ENCODE measurements at regions of chr1 and their contacts with region 1.

Region 1: DNA sequence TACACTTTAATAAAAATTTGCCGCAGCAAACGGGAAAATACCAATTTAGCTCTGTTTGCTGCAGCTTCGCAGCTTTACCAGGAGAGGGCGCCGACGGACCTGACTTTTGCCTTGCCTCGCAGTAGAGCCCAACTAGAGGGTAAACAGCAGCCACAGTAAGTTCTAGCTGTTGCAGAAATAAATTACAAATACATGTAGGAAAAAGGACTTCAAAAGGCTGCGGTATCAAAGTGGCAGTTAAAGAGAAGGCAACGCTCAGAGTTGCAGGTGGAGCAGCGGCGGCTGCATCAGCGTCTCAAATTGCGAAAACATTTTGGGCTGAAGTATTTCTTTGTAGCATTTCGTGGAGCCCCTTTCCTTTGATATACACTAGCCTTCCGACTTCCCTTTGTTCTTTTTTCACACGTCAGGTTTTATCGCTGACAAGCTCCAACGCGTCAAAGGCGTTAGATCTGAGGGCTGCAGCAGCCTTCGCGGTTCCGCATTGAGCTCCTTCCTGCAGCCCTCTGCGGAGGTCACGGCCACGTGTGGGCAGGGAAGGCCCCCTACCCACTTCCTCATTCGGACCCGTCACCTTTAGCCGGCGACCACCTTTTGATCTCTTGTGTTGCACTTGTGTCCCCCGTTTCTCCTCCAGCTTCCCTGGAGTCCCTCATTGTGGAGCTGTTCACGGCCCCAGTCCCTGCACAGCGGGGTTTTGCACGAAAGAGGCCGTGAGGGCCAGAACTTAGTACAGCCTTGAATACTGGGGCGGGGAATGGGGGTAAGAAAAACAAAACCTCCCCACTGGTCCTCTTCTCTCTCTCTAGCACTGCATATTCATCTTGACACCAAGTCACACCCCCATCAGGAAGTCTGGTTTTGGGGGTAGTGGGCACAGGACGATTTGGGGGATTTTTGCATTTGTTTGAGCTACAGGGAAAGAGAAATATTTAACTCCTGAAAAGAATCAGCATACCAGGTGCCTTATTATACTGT is 72.8 kb downstream of the S1PR1 start:
- DNase-seq: peak; percentile 57
- ATAC-seq: peak; percentile 75
- H3K4me3 Mint-ChIP-seq: peak overlapping the region; percentile 82
- H3K27ac Mint-ChIP-seq: peak overlapping the region; percentile 94
- H3K4me1 Mint-ChIP-seq: peaks cover 78% of the 10 kb centered on the region
- H3K27me3 Mint-ChIP-seq: no peaks in the 10 kb centered on the region
- CTCF ChIP-seq: peak; percentile 77

Region 2: DNA sequence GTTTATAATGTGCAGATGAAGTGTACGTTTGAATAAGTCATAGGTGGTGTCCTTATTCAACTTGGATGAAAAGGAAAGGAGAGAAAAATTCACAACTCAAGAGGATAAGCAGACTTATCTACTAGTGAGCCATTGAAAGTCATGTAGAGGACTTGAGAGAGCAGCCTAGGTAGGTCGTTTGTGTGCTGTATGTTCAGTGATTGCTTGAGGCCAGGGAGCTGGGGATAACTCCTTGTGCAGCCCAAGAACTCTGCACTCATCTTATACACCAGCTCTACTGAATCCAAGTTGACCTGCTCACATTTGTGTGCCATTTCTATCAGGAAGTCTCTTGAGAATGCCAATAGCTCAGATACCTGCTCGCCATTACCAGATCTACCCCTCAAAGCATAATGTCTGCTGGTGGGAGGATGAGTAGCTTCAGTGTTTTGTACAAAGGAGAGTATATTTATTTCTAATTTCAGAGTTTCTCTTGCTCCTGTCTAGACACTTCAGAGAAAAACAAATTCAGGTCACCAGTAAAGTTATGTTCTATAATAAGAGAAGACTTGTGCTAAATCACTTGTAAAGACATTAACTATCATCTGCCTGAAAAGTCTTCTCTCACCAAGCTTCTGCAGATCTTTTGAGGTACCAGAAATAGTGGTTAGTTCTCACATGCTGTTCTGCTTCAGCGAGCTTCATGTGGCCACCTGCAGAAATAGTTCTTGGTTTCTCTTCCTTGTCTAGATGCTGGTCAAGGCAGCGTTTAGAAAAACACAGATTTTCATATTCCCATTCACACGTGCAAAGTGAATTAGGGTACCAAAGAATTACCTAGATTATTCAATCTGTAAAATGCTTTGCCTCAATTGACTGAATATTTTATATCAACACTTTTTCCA is 62.0 kb before region 1 on chr1:
- CTCF ChIA-PET with region 1: interaction called, 7 read pairs
- POLR2A ChIA-PET with region 1: interaction called, 14 read pairs
- intact Hi-C with region 1: no loop called
- DNase-seq: no peak
- ATAC-seq: peak; percentile 89
- H3K4me3 Mint-ChIP-seq: peak overlapping the region; percentile 44
- H3K27ac Mint-ChIP-seq: peak overlapping the region; percentile 82
- H3K4me1 Mint-ChIP-seq: peaks cover 82% of the 10 kb centered on the region
- H3K27me3 Mint-ChIP-seq: no peaks in the 10 kb centered on the region
- CTCF ChIP-seq: no peak

Region 3: DNA sequence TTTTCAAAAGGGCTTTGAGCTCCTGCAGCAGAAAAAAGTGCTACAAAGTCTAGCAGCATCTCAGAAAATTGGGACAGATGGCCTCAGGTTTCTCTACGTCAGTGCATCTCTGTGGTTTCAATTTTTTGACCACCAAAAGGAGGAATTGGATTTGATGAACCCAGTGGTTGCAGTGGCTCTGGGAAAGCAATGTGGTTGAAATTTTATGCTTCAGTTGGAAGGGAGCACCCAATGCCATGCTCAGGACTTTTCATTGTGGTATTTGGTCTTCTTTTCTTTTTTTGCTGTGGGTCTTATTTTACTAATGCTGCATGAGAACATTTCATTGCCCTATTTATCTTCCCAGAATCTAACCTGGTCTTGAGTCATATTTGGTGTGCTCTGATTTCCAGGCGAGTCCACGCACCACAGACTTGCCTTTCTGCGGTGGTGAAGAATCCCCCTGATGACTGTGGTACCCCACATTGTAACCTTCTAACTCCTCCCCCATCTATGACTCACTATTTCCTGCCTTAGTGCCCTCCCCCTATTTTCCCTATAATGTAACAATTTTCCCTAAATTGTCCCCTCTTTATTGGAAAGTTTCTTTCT is 16.1 kb before region 1 on chr1:
- CTCF ChIA-PET with region 1: interaction called, 38 read pairs
- POLR2A ChIA-PET with region 1: interaction called, 66 read pairs
- intact Hi-C with region 1: loop called (anchors 1 kb)
- DNase-seq: no peak
- ATAC-seq: peak; percentile 80
- H3K4me3 Mint-ChIP-seq: peak overlapping the region; percentile 47
- H3K27ac Mint-ChIP-seq: peak overlapping the region; percentile 88
- H3K4me1 Mint-ChIP-seq: peaks cover 60% of the 10 kb centered on the region
- H3K27me3 Mint-ChIP-seq: no peaks in the 10 kb centered on the region
- CTCF ChIP-seq: no peak

Region 4: DNA sequence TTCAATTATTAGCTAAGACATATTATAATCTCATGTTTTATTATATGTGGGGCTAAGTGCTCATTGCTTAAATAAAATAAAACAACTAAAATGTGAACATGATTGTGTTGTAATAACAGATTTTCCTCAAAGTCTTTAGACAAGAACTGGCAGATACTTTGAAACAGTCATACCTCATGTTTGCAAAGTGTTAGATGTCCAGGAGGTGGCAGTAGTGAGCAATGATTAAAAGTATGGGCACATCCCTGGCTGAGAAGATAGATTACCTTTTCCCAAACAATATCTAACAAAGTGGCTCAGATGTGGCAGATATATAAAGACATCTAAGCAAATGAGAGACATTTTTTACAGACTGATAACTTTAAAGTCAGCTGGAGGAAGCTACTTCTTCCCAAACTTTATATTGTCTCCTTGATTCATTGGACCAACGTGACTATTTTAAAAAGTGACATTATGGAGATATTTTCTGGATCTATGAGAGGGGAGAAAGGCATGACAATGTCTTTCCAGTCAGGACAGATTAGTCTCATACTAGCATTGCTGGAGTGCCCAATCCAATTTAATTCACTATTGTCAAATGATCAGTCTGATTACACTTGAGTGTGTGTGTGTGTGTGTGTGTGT is 197.0 kb after region 1 on chr1:
- CTCF ChIA-PET with region 1: interaction called, 4 read pairs
- POLR2A ChIA-PET with region 1: no interaction called
- intact Hi-C with region 1: loop called (anchors 2 kb)
- DNase-seq: no peak
- ATAC-seq: peak; percentile 57
- H3K4me3 Mint-ChIP-seq: no peak overlapping the region
- H3K27ac Mint-ChIP-seq: no peak overlapping the region
- H3K4me1 Mint-ChIP-seq: no peaks in the 10 kb centered on the region
- H3K27me3 Mint-ChIP-seq: peaks cover 5% of the 10 kb centered on the region
- CTCF ChIP-seq: peak; percentile 17

Region 5: GRCh38 chr1:101567582-101568189 is 258.1 kb after region 1 on chr1:
- CTCF ChIA-PET with region 1: interaction called, 7 read pairs
- POLR2A ChIA-PET with region 1: no interaction called
- intact Hi-C with region 1: loop called (anchors 1 kb)
- DNase-seq: peak; percentile 17
- ATAC-seq: peak; percentile 76
- H3K4me3 Mint-ChIP-seq: no peak overlapping the region
- H3K27ac Mint-ChIP-seq: no peak overlapping the region
- H3K4me1 Mint-ChIP-seq: no peaks in the 10 kb centered on the region
- H3K27me3 Mint-ChIP-seq: peaks cover 14% of the 10 kb centered on the region
- CTCF ChIP-seq: peak; percentile 99

Measured in activated B cell treated with CpG ODN at 0.5 μM for 24 hours (primary cell).